ENCODE measurements at regions of chr1 and their contacts with region 1.

Region 1: DNA sequence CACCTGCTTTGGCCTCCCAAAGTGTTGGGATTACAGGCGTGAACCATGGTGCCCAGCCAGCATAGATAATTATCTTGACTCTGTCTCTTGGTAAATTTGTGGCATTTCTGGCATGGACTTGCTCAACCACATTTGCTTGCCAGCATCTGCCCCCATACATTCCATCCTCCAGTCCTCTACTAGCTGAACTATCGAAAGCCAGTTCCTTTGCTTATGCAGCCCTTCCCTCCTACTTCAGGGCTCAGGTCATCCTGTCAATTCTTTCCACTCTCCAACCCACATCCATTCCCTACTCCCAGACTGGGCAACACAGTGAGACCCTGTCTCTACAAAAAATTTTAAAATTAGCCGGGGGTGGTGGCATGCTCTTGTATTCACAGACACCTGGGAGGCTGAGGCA is 13.0 kb upstream of the UQCRHL start:
- DNase-seq: no peak
- ATAC-seq: no peak
- H3K4me3 Mint-ChIP-seq: no peak overlapping the region
- H3K27ac Mint-ChIP-seq: no peak overlapping the region
- H3K4me1 Mint-ChIP-seq: peaks cover 3% of the 10 kb centered on the region
- H3K27me3 Mint-ChIP-seq: no peaks in the 10 kb centered on the region
- CTCF ChIP-seq: no peak

Region 2: DNA sequence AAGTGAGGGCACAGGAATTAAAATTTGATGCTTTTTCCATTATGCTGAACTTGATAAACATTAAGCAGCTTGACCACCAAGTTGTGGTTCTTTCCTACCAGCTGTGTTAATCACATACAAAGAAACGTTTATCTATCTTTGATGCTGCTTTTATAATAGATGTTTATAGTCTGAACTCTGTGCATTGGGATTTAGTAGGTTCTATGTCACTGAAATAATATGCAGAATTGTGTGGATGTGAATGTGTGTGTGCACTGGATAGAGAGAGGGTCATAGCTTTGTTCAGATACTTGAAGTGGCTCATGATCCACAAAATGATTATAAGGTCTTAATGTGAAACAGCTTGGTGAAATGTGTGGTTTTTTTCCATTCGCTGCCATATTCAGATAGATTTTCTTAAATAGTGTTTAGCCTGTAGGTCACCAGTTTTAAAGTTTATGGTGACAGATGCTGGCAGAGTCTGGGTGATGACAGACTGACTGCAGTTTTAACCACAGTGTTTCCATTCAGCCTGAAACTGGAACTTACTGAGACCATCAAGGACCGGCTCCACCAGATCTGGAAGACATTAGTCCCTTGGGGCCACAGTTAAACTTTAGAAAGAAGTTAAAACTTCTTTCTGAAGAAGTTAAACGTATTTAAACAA is 193.0 kb before region 1 on chr1:
- CTCF ChIA-PET with region 1: no interaction called
- POLR2A ChIA-PET with region 1: no interaction called
- DNase-seq: no peak
- ATAC-seq: no peak
- H3K4me3 Mint-ChIP-seq: no peak overlapping the region
- H3K27ac Mint-ChIP-seq: no peak overlapping the region; the same call in 1 of the 2 replicates
- H3K4me1 Mint-ChIP-seq: peaks cover 7% of the 10 kb centered on the region; the same call in 1 of the 2 replicates
- H3K27me3 Mint-ChIP-seq: no peaks in the 10 kb centered on the region
- CTCF ChIP-seq: no peak

Region 3: GRCh38 chr1:15717418-15718125 is 102.9 kb before region 1 on chr1:
- CTCF ChIA-PET with region 1: no interaction called
- POLR2A ChIA-PET with region 1: no interaction called
- DNase-seq: no peak
- ATAC-seq: no peak
- H3K4me3 Mint-ChIP-seq: no peak overlapping the region
- H3K27ac Mint-ChIP-seq: no peak overlapping the region
- H3K4me1 Mint-ChIP-seq: no peaks in the 10 kb centered on the region
- H3K27me3 Mint-ChIP-seq: no peaks in the 10 kb centered on the region
- CTCF ChIP-seq: no peak

Region 4: DNA sequence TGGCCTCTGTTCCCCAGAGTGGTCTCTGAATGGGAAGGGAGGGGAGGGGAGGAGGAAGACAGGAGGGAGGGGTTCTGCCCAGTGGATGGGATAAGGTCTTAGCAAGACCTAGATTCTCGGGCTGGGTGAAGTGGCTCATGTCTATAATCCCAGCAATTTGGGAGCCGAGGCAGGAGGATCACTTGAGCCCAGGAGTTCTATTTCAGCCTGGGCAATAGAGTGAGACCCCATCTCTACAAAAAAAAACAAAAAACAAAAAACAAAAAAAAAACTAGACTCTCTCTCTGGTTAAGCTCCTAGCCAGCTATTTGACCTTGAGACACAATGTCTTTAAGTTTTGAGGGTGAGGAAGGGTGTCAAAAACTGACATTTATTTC is 24.4 kb before region 1 on chr1:
- CTCF ChIA-PET with region 1: interaction called, 32 read pairs
- POLR2A ChIA-PET with region 1: no interaction called
- DNase-seq: no peak
- ATAC-seq: no peak
- H3K4me3 Mint-ChIP-seq: no peak overlapping the region
- H3K27ac Mint-ChIP-seq: no peak overlapping the region
- H3K4me1 Mint-ChIP-seq: peaks cover 19% of the 10 kb centered on the region
- H3K27me3 Mint-ChIP-seq: no peaks in the 10 kb centered on the region
- CTCF ChIP-seq: no peak

Region 5: DNA sequence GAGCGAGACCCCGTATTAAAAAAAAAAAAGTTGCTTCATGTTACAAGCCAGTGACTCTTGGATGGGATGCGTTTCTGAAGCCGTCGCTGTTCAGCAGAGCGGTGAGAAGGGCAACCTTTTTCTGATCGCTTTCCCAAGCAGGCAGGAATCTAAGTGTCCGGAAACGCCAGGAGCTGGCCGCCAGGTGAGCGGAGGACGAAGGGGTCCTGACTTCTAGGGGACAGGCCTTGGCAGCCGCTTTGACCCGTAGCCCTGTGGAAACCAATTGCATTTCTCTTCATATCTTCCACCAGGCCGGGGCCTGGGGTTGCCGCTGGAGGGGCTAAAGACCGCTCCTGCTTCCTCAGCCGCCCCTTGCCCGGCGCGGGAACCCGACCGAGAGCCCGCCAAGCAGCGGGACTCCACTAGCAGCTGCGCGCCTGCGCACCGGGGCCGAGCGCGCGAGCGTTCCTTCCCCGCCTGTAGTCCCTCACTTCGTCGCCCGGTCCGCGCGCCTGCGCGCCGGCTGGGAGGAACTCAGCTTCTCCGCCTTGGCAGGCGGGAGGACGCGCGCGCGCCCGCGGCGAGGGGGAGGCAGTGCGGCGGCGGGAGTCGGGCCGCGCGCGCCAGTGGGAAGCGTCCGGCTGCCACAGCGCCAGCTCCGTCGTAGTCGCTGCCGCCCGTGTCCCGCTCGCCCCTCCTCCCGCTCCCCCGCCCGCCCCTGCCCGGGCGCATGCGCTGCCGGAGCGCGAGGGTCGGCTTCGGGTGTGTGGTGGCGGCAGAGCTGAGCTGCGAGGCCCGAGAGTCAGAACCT is 26.8 kb after region 1 on chr1 and contains the start of gene SPEN:
- CTCF ChIA-PET with region 1: interaction called, 23 read pairs
- POLR2A ChIA-PET with region 1: interaction called, 7 read pairs
- DNase-seq: peak; percentile 95
- ATAC-seq: peak; percentile 73
- H3K4me3 Mint-ChIP-seq: peak within 1 kb of the TSS; percentile 92
- H3K27ac Mint-ChIP-seq: peak within 1 kb of the TSS; percentile 100
- H3K4me1 Mint-ChIP-seq: peaks cover 29% of the 10 kb centered on the region
- H3K27me3 Mint-ChIP-seq: peaks cover 5% of the 10 kb centered on the region; the same call in 1 of the 2 replicates
- CTCF ChIP-seq: no peak
- total RNA-seq, gene SPEN: 48.5 to 50.2 TPM (median 48.8 TPM) in 3 replicates

Region 6: DNA sequence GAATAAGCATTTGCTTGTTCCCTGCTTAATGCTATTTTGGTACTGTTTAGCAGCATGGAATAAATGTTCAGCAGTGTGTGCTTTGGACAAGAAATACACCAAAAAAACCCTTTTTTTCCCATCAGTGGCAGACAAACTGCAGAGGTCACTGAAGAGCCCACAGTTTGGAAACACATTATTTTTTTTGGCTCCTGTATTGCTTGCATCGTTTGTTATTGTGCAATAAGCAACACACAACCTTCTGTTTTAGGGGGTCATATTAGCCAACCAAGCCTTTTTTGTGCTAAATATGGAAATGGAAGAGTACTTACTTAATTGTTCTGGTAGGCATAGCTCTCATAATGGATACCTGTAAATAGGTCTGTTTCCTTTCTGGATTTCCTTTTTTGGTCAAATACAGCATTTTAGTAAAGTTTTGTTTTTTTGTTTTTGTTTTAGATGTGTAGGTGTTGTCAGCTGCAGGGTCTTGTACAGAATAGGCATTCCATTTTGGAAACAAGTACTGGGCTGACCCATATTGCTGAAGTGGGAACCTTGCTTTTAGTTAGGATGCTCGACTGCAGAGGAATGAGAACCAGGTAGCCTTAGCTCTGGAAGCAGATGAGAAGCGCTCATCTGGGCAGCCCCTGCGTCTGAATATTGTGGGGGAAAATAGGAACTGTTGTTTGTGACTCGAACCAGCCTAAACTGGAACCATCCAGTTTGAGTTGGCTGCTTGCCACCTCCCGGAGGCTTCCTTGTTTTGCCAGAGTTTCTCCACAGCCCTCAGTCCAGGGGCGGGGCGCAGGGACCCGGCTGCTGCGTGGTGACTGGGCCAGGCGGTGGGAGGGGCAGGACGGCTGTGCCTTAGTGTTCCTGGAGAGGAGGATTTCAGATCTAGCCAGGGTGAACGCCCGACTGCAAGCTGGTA is 65.5 kb after region 1 on chr1:
- CTCF ChIA-PET with region 1: interaction called, 11 read pairs
- POLR2A ChIA-PET with region 1: no interaction called
- DNase-seq: peak; percentile 95
- ATAC-seq: peak; percentile 99
- H3K4me3 Mint-ChIP-seq: peak overlapping the region; percentile 47
- H3K27ac Mint-ChIP-seq: peak overlapping the region; percentile 99
- H3K4me1 Mint-ChIP-seq: peaks cover 29% of the 10 kb centered on the region
- H3K27me3 Mint-ChIP-seq: no peaks in the 10 kb centered on the region
- CTCF ChIP-seq: no peak

Region 7: DNA sequence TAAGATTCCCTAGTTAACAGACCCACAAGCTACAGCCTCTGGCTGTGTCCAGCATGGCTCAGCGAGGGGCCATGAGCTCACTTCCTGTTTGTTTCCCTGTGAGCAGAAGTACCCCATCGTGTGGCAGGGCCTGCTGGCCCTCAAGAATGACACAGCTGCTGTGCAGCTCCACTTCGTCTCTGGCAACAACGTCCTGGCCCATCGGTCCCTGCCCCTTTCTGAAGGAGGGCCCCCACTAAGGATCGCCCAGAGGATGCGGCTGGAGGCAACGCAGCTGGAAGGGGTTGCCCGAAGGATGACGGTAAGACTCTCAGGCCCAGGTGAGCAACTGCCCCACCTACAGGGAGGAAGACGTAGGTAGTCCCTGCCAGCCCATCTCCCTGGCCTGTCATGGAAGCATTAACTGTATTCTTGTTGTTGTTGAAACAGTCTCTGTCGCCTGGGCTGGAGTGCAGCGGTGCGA is 117.3 kb after region 1 on chr1:
- CTCF ChIA-PET with region 1: interaction called, 32 read pairs
- POLR2A ChIA-PET with region 1: interaction called, 3 read pairs
- DNase-seq: peak; percentile 56
- ATAC-seq: peak; percentile 85
- H3K4me3 Mint-ChIP-seq: no peak overlapping the region
- H3K27ac Mint-ChIP-seq: peak overlapping the region; percentile 81
- H3K4me1 Mint-ChIP-seq: peaks cover 6% of the 10 kb centered on the region
- H3K27me3 Mint-ChIP-seq: no peaks in the 10 kb centered on the region
- CTCF ChIP-seq: no peak

Region 8: GRCh38 chr1:15975805-15976680 is 155.6 kb after region 1 on chr1 and contains the start of gene ZBTB17:
- CTCF ChIA-PET with region 1: interaction called, 11 read pairs
- POLR2A ChIA-PET with region 1: no interaction called
- DNase-seq: peak; percentile 96
- ATAC-seq: peak; percentile 90
- H3K4me3 Mint-ChIP-seq: peak within 1 kb of the TSS; percentile 89
- H3K27ac Mint-ChIP-seq: peak within 1 kb of the TSS; percentile 85
- H3K4me1 Mint-ChIP-seq: peaks cover 12% of the 10 kb centered on the region
- H3K27me3 Mint-ChIP-seq: no peaks in the 10 kb centered on the region; the same call in 1 of the 2 replicates
- CTCF ChIP-seq: no peak
- total RNA-seq, gene ZBTB17: 27.6 to 32.0 TPM (median 27.9 TPM) in 3 replicates